ENCODE measurements at regions of chr16 and their contacts with region 1.

Region 1: DNA sequence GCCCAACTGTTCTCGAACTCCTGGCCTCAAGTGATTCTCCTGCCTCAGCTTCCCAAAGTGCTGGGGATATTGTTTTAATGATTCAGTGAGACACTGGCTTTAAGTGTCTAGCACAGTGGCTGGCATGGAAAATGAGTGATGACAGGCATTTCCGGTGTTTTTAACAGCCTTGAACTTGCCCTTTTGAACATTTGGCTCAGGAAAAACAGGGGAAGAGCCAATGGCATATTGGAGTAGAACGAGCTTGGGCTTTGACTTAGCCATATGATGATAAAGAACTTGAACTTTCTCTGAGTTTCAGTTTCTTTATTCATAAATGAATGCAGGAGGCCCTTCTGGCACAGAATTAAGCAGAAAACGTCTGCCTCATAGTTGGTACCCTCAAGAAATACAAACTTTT is 145.0 kb upstream of the HS3ST4 start:
- DNase-seq: no peak
- H3K4me3 ChIP-seq: no peak overlapping the region
- H3K27ac ChIP-seq: no peak overlapping the region
- H3K4me1 ChIP-seq: no peaks in the 10 kb centered on the region
- H3K27me3 ChIP-seq: no peaks in the 10 kb centered on the region
- CTCF ChIP-seq: no peak

Region 2: DNA sequence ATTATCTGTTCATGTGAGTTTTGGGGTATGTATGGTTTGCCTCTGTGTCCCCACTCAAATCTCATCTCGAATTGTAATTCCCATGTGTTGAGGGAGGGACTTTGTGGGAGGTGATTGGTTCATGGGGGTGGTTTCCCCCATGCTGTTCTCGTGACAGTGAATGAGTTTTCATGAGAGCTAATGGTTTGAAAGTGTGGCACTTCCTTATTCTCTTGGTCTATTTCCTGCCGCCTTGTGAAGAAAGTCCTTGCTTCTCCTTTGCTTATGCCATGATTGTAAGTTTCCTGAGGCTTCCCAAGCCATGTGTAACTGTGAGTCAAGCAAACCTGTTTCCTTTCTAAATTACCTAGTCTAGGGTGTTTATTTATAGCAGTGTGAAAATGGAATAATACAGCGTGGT is 16.9 kb after region 1 on chr16:
- intact Hi-C with region 1: loop called (anchors 1 kb)
- DNase-seq: no peak
- H3K4me3 ChIP-seq: no peak overlapping the region
- H3K27ac ChIP-seq: no peak overlapping the region
- H3K4me1 ChIP-seq: no peaks in the 10 kb centered on the region
- H3K27me3 ChIP-seq: no peaks in the 10 kb centered on the region
- CTCF ChIP-seq: no peak

Measured in tibial artery (tissue), 4 donors.